ENCODE measurements at regions of chr2 and their contacts with region 1.

Region 1: DNA sequence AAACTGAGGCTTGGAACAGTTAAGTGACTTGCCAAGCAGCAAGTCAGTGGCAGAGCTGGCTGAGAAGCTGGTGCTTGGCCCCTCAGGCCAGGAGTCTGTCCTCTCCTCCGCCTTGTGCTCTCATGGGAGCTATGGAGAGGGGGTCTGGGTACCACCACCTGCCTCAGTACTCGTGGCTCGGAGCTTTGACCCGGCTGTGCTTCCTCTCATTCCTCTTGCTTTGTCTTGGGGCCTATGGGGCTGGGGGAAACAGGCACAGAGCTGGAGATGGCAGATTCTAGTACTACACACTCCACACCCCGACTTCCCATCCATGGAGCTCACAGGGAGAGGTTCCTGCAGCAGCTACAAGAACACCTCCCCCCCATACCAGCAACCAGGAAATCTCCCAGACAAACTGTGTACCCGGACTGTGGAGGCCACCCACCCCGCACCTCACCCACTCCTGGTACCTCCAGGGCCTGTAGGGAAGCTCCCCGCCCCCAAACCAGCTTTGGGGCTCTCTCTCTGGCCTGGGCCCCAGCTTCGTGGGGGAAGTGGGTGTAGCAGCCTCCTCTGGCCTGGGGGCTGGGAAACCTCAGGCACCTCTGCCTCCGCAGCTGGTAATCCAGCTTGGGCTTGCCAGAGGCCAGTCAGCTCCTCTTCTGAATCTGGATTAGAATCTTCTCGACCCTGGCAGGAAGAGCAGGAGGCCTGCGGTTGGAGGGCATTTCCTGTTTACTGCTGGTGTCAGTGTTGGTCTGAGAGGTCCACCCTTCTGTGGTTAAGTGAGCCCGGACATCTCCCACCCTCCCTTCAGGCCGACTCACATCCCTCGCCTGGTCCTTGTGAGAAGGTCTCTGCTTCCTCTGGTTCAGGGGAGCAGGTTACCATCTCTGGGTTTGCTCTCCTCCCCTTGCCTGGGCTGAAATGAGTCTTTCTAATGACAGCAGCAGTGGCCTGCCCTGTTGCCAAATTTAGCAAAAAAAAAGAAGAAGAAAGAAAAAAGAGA is 22.3 kb upstream of the RHOB start:
- DNase-seq: peak; percentile 51
- H3K4me3 ChIP-seq: no peak overlapping the region
- H3K27ac ChIP-seq: no peak overlapping the region
- H3K4me1 ChIP-seq: peaks cover 41% of the 10 kb centered on the region
- H3K27me3 ChIP-seq: no peaks in the 10 kb centered on the region
- CTCF ChIP-seq: no peak

Region 2: DNA sequence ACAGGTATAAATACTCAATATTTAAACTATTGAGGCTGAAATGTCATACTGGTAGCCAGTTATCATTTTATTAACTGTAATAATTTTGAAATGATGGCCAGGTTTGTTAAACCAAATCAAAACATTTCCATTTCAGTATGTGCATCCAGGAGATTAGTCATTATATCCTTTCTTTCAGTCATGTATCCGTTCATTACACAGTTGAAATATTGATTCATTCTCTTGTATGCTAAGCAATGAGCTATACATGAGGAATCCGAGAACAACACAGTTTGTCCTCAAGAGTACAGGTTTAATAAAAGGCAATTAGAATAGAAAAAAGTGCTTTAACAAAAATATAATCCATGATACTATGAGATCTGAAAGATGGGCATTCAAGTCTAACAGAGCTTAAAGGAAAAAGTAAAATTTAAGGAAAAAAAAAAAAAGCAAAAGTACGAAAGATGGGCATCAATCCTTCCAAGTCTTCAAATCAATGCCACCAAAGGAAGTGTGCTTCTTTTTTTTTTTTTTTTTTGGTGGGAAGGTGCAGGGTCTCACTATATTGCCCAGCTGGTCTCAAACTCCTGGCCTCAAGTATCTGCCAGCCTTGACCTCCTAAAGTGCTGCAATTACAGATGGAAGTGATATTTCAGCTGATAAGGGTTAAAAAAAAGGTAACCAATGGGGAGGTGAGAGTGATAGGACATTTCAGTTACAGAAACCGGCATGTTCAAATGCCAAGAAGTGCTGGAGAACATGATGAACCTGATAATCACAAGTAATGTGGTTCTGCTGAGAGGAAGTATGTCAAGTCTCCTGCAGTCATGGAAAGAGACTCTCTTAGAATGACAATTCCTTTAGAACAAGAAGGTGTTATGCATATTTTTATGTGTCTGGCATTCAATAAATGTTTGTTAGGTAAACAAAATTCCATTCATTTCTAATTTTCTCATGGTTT is 109.8 kb before region 1 on chr2:
- CTCF ChIA-PET with region 1: no interaction called
- dilution Hi-C with region 1: loop called (anchors 5 kb)
- in situ Hi-C with region 1: no loop called
- intact Hi-C with region 1: no loop called
- DNase-seq: peak; percentile 22
- H3K4me3 ChIP-seq: no peak overlapping the region
- H3K27ac ChIP-seq: no peak overlapping the region
- H3K4me1 ChIP-seq: no peaks in the 10 kb centered on the region
- H3K27me3 ChIP-seq: no peaks in the 10 kb centered on the region
- CTCF ChIP-seq: no peak

Region 3: DNA sequence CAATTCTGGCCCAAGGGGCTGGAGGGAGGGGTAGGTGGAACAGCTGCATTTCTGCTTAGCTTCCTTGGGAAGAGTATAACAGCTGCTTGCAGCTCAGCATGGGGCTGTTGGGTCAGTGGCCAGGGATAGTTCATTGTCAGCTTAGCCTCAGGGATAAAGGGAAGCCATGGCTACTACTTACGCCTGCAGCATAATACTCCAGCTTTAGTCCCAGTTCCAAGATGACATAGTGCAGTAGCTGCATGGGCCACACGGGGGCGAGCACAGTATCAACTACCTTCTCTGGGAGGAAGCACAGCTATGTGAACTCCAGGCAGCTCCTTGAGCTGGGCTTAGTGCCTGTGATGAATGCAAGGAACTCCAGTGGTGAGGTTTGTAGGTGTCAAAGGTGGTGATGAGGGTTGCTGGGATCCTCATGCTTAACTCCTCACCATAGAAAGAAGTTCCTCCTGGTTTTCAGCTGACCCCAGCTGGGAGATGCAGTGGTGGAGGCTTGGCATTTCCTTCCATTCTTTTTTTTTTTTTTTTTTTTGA is 13.2 kb before region 1 on chr2:
- CTCF ChIA-PET with region 1: interaction called, 17 read pairs
- dilution Hi-C with region 1: no loop called
- in situ Hi-C with region 1: no loop called
- intact Hi-C with region 1: no loop called
- DNase-seq: peak; percentile 72
- H3K4me3 ChIP-seq: no peak overlapping the region
- H3K27ac ChIP-seq: no peak overlapping the region
- H3K4me1 ChIP-seq: peaks cover 10% of the 10 kb centered on the region
- H3K27me3 ChIP-seq: no peaks in the 10 kb centered on the region
- CTCF ChIP-seq: peak; percentile 89 to 92

Region 4: GRCh38 chr2:20650880-20651730 is 226.5 kb after region 1 on chr2 and contains the start of gene HS1BP3:
- CTCF ChIA-PET with region 1: no interaction called
- dilution Hi-C with region 1: loop called (anchors 5 kb)
- in situ Hi-C with region 1: no loop called
- intact Hi-C with region 1: no loop called
- DNase-seq: peak; percentile 81
- H3K4me3 ChIP-seq: peak within 1 kb of the TSS; percentile 86 to 99 (median 91)
- H3K27ac ChIP-seq: peak within 1 kb of the TSS; percentile 92
- H3K4me1 ChIP-seq: peaks cover 17% of the 10 kb centered on the region
- H3K27me3 ChIP-seq: no peaks in the 10 kb centered on the region
- CTCF ChIP-seq: peak; percentile 65 to 70
- total RNA-seq, gene HS1BP3: 20.5 to 26.5 TPM